Right lobe of liver (tissue), 6 donors: ENCODE measurements at regions of chr15 and their contacts with region 1.

Region 1: GRCh38 chr15:30962079-30962478 is 29.3 kb downstream of the MTMR10 start:
- DNase-seq: no peak
- ATAC-seq: no peak
- H3K4me3 ChIP-seq: no peak overlapping the region
- H3K27ac ChIP-seq: no peak overlapping the region
- H3K4me1 ChIP-seq: no peaks in the 10 kb centered on the region
- H3K27me3 ChIP-seq: no peaks in the 10 kb centered on the region
- CTCF ChIP-seq: no peak
- POLR2A ChIP-seq: no peak

Region 2: DNA sequence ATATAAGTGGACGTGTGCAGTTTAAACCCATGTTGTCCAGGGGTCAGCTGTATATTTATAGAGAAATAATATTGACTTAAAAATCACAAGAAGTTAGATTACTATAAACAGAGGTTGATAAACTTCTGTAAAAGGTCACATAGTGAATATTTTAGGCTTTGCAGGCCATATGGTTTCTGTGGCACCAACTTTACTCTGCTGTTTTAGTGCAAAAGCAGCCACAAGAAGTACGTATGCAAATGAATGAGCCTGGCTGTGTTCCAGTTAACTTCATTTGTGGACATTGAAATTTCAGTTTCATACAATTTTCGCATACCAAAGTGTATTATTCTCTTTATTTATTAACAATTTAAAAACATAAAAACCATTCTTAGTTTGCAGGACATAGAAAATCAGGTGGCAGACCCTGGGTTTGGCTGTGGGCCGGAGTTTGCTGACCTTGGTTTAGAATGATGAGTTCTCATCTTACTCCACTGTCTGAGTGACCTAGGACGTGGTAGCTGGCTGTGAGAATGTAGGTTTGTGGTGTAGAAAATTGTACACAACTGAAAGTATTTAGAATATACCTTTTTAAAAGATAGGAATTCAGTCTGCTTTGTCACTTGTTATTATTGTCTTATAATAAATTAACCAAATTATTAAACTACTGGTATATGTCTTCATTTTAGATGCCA is 42.1 kb before region 1 on chr15:
- intact Hi-C with region 1: loop called in 1 of 2 experiments (anchors 10 kb)
- DNase-seq: no peak
- ATAC-seq: no peak
- H3K4me3 ChIP-seq: no peak overlapping the region
- H3K27ac ChIP-seq: no peak overlapping the region
- H3K4me1 ChIP-seq: peaks cover 0 to 8% (median 3%) of the 10 kb centered on the region in 4 donors
- H3K27me3 ChIP-seq: no peaks in the 10 kb centered on the region
- CTCF ChIP-seq: no peak
- POLR2A ChIP-seq: no peak